ENCODE measurements at regions of chr21 and their contacts with region 1.

Region 1: DNA sequence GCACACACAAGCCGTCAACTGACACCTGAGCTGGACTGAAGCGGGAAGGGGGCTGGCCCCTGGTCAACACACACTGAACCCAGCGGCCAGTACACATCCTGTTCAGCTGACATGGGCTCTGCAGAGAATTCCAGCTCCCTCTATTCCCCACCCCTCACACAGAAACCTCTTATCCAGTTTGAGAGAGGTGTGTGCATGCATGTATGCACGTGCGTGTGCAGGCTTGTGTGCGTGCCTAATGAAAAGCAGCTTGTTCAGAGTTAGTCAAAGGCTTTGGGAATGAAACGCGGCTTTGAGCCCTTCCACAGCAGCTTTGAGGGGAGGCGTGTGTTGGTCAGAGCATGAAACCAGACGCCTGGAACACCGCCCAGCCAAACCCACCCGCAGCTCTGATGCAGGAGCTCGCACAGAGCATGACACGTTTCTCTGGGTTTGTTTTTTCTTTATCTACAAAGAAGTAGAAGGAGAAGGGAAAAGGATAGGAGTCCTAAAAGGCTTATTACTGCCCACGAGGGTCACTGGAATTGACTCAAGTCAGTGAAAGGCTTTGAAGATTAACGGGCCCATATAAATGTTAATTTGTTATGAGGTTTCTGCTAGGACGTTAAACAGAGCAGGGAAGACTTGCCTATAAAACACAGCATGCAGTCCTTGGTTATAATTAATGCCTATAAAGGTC is 184.2 kb downstream of the ETS2 start:
- DNase-seq: no peak
- H3K4me3 ChIP-seq: no peak overlapping the region
- H3K27ac ChIP-seq: no peak overlapping the region
- H3K4me1 ChIP-seq: peaks cover 7 to 29% (median 24%) of the 10 kb centered on the region in 4 experiments
- H3K27me3 ChIP-seq: no peaks in the 10 kb centered on the region
- CTCF ChIP-seq: no peak
- EP300 ChIP-seq: no peak
- POLR2A ChIP-seq: no peak
- RAD21 ChIP-seq: no peak

Region 2: GRCh38 chr21:38972078-38972477 is 17.8 kb before region 1 on chr21:
- CTCF ChIA-PET with region 1: no interaction called
- POLR2A ChIA-PET with region 1: no interaction called
- DNase-seq: no peak
- H3K4me3 ChIP-seq: no peak overlapping the region
- H3K27ac ChIP-seq: no peak overlapping the region
- H3K4me1 ChIP-seq: no peaks in the 10 kb centered on the region
- H3K27me3 ChIP-seq: no peaks in the 10 kb centered on the region
- CTCF ChIP-seq: no peak
- EP300 ChIP-seq: no peak
- POLR2A ChIP-seq: no peak
- RAD21 ChIP-seq: no peak

Region 3: GRCh38 chr21:39010640-39011404 is 20.9 kb after region 1 on chr21:
- CTCF ChIA-PET with region 1: interaction called, 10 read pairs
- POLR2A ChIA-PET with region 1: no interaction called
- DNase-seq: no peak
- H3K4me3 ChIP-seq: no peak overlapping the region
- H3K27ac ChIP-seq: no peak overlapping the region
- H3K4me1 ChIP-seq: peaks cover 0 to 4% (median 1%) of the 10 kb centered on the region in 4 experiments; a peak in 3 of 7 replicates
- H3K27me3 ChIP-seq: no peaks in the 10 kb centered on the region; a peak in 1 of 7 replicates
- CTCF ChIP-seq: no peak
- EP300 ChIP-seq: no peak
- POLR2A ChIP-seq: no peak
- RAD21 ChIP-seq: no peak

Measured in H1 (cell line).